Aorta (tissue), 5 donors: ENCODE measurements at regions of chr10 and their contacts with region 1.

Region 1: DNA sequence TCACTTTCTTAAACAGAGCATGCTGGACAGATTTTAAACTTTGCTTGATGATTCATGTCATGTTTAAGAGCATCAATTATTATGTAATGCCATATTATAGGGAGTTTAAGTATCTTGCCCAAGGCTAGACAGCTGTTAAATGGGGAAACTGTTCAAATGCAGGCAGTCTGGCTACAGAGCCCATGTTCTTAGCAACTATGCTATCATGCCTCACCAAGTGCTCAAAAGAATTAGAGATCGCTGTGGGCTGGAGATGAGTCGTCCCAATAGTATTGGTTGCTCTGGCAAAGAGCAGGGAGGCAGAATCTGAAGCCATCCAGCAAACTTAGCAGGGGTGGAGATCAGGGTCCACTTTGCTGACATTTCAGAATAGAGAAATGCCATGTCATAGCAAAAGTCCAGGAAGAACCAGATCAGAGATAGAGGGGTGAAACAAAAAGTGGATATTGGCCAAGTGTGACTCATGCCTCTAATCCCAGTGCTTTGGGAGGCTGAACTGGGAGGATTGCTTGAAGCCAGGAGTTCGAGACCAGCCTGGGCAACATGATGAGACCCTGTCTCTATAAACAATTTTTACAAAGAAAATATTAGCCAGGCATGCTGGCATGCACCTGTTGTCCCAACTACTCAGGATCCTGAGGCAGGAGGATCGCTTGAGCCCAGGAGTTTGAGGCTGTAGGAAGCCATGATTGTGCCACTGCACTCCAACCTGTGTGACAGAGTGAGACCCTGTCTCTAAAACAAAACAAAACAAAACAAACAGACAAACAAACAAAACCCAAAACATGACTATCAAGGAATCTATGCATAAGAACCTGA is 57.8 kb downstream of the BAMBI start:
- DNase-seq: peak in 1 of 2 donors; percentile 62
- ATAC-seq: peak; percentile 72
- H3K4me3 ChIP-seq: no peak overlapping the region
- H3K27ac ChIP-seq: peak overlapping the region in 1 of 2 donors; percentile 17
- H3K4me1 ChIP-seq: no peaks in the 10 kb centered on the region
- H3K27me3 ChIP-seq: no peaks in the 10 kb centered on the region

Region 2: GRCh38 chr10:28580825-28581224 is 154.3 kb before region 1 on chr10:
- intact Hi-C with region 1: no loop called
- DNase-seq: no peak
- ATAC-seq: no peak
- H3K4me3 ChIP-seq: no peak overlapping the region
- H3K27ac ChIP-seq: no peak overlapping the region
- H3K4me1 ChIP-seq: peaks cover 4 to 7% of the 10 kb centered on the region in 2 donors
- H3K27me3 ChIP-seq: no peaks in the 10 kb centered on the region

Region 3: DNA sequence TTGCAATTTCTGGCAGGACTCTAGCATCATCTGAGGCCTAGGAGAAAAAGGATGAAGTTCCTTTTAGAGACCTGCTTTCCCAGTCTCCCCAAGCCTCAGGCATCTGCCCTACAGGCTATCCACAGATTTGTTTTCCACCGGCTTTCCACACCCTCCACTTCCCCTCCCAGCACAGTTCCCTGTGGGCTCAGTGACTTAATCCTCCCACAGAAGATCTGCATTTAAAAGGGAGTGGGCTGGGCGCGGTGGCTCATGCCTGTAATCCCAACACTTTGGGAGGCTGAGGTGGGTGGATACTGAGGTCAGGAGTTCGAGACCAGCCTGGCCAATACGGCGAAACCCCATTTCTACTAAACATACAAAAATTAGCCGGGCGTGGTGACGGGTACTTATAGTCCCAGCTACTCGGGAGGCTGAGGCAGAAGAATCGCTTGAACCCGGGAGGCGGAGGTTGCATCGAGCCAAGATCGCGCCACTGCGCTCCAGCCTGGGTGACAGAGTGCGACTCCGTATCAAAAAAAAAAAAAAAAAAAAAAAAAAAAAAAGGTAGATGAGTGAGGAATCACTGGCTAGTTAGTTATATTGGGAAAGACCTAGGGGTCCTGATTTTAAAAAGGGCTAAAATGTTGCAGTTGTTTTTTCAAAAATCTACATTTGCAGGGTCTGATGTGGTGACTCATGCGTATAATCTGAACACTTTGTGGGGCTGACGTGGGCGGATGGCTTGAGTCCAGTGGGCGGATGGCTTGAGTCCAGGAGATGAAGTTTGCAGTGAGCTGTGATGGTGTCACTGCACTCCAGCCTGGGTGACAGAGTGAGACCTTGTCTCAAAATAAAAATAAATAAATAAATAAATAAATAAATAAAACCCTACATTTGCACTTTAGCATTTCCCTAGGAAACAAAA is 61.7 kb after region 1 on chr10:
- intact Hi-C with region 1: loop called in 1 of 2 experiments (anchors 5 kb)
- DNase-seq: peak; percentile 80 to 92
- ATAC-seq: peak; percentile 83
- H3K4me3 ChIP-seq: no peak overlapping the region
- H3K27ac ChIP-seq: no peak overlapping the region
- H3K4me1 ChIP-seq: peaks cover 0 to 7% of the 10 kb centered on the region in 2 donors
- H3K27me3 ChIP-seq: no peaks in the 10 kb centered on the region

Region 4: DNA sequence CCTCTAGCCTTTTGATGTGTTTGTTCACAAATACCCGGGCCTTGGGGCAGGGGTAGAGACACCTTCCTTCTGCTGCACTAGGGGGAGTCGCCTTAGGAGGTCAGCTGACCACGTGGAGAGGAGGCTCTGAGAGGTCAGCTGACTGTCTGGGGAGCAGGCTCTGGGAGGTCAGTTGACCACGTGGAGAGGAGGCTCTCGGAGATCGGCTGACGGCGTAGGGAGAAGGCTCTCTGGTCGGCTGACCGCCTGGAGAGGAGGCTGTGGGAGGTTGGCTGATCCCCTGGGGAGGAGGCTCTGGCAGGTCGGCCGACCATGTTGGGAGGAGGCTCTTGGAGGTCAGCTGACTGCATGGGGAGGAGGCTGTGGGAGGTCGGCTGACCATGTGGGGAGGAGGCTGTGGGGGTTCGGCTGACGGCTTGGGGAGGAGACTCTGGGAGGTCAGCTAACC is 494.1 kb after region 1 on chr10:
- intact Hi-C with region 1: no loop called
- DNase-seq: no peak
- ATAC-seq: no peak
- H3K4me3 ChIP-seq: no peak overlapping the region
- H3K27ac ChIP-seq: no peak overlapping the region
- H3K4me1 ChIP-seq: no peaks in the 10 kb centered on the region
- H3K27me3 ChIP-seq: no peaks in the 10 kb centered on the region